OCI-LY7 (cell line): ENCODE measurements at regions of chr14 and their contacts with region 1.

Region 1: GRCh38 chr14:20697273-20698017 is 8.9 kb downstream of the ANG start:
- DNase-seq: peak; percentile 75
- H3K4me3 ChIP-seq: peak overlapping the region; percentile 4
- H3K27ac ChIP-seq: no peak overlapping the region
- H3K4me1 ChIP-seq: no peaks in the 10 kb centered on the region
- CTCF ChIP-seq: peak; percentile 91

Region 2: DNA sequence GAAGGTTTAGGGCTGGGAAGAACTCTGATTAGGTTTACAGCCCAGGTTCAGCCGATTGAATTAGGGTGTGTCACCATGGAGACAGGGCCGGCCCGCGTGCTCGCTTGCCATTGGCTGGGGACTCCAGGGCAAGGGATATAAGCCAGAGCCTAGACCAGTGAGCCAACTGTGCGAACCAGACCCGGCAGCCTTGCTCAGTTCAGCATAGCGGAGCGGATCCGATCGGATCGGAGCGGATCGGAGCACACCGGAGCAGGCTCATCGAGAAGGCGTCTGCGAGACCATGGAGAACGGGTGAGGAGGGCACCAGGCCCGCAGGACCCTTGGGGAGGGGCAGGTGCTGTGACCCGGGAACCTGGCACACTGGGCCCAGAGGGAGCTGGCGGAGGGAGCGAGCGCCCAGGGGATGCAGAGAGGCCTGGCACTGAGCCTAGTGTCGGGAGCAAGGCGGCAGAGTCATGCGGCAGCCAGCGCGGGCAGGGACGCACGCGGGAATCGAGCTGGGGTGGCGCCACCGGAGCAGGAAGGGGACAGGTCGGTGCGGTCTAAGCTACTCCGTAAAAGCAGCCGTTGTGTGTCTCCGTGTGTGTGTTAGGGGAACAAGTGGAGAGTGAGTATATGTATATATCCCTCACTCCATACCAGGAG is 228.1 kb before region 1 on chr14 and contains the start of gene PNP:
- CTCF ChIA-PET with region 1: no interaction called
- POLR2A ChIA-PET with region 1: no interaction called
- intact Hi-C with region 1: no loop called
- DNase-seq: peak; percentile 92
- H3K4me3 ChIP-seq: peak within 1 kb of the TSS; percentile 83
- H3K27ac ChIP-seq: peak within 1 kb of the TSS; percentile 71
- H3K4me1 ChIP-seq: peaks cover 23% of the 10 kb centered on the region
- CTCF ChIP-seq: peak; percentile 21; the same call in 1 of the 2 replicates
- total RNA-seq, gene PNP: 120 and 127 TPM in 2 replicates

Region 3: DNA sequence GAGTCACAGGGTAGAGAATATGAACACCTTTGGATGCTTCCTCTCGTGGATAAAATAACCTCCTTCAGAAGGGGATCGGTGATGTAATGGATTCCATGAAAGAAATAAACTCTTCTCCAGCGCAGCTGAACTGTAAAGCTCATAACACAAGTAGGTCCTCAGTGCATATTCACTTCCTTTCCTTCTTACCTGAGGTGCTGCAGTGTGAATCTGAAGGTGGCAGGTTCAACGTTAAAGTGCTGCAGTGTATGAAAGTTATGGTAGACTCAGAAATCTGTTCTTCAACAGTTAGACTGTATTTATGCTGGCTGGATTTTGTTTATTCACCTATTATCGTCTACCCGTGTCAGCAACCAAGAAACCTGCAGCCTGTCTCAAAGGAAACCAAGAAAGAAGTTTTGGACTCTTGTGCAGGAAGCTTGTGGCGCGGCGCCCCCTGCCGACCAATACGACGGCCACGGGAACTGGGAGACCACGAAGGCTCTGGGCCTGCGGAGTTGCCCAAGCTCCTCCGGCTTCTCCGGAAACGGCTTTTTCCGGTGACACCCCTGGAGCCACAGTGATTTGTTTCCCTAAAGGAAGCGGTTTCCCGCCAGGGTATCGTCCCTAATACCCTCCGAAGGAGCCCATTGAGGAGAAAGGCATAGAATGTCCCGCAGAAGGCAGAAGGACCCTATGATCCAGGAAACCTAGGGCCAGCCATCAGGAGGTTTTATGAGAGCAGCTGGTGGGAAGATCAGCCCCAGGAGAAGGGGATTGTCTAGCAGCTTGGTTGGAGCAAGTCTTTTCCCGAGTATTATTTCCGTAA is 176.1 kb after region 1 on chr14:
- CTCF ChIA-PET with region 1: no interaction called
- POLR2A ChIA-PET with region 1: interaction called, 3 read pairs
- intact Hi-C with region 1: loop called (anchors 5 kb)
- DNase-seq: peak; percentile 56
- H3K4me3 ChIP-seq: no peak overlapping the region
- H3K27ac ChIP-seq: no peak overlapping the region
- H3K4me1 ChIP-seq: no peaks in the 10 kb centered on the region
- CTCF ChIP-seq: peak; percentile 88